Activated CD4-positive, alpha-beta memory T cell treated with anti-CD3 and anti-CD28 coated beads, Interleukin-2, amount 10 ng/mL, durations not matched to agents 7 days and 5 days (primary cell): ENCODE measurements at regions of chr22 and their contacts with region 1.

Region 1: GRCh38 chr22:40044102-40044869 is 49.5 kb downstream of the FAM83F start:
- DNase-seq: peak; percentile 99
- H3K4me3 Mint-ChIP-seq: peak overlapping the region; percentile 92
- H3K27ac Mint-ChIP-seq: peak overlapping the region; percentile 97
- H3K4me1 Mint-ChIP-seq: peaks cover 26% of the 10 kb centered on the region
- H3K27me3 Mint-ChIP-seq: peaks cover 7% of the 10 kb centered on the region

Region 2: DNA sequence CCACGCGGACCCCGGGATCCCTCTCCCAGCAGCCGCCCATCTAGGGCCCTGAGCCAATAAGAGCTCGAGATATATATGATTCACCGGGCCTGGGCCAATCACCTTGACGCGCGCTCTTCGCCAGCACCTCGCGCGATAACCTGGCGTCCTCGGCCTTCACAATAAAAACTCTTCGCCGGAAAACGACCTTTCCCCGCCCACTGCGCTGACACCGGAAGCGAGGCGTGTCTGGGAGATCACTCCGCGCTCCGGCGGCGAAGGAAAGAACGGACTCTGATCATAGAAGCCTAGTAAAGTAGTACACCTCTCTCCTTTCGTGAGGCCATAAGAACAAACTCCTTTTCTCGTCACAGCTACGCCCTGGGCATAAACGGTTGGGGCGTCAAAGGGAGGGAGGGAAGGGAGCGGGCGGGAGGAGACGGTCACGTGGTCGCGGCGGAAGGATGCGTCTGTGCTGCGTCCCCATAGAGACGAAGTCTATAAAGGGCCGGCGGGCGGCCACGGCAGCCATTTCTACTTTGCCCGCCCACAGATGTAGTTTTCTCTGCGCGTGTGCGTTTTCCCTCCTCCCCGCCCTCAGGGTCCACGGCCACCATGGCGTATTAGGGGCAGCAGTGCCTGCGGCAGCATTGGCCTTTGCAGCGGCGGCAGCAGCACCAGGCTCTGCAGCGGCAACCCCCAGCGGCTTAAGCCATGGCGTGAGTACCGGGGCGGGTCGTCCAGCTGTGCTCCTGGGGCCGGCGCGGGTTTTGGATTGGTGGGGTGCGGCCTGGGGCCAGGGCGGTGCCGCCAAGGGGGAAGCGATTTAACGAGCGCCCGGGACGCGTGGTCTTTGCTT is 524.0 kb before region 1 on chr22 and contains the start of gene ATF4:
- CTCF ChIA-PET with region 1: interaction called, 3 read pairs
- POLR2A ChIA-PET with region 1: interaction called, 27 read pairs
- DNase-seq: peak; percentile 97
- H3K4me3 Mint-ChIP-seq: peak within 1 kb of the TSS; percentile 94
- H3K27ac Mint-ChIP-seq: peak within 1 kb of the TSS; percentile 99
- H3K4me1 Mint-ChIP-seq: peaks cover 58% of the 10 kb centered on the region
- H3K27me3 Mint-ChIP-seq: peaks cover 2% of the 10 kb centered on the region
- total RNA-seq, gene ATF4: 456 to 460 TPM

Region 3: DNA sequence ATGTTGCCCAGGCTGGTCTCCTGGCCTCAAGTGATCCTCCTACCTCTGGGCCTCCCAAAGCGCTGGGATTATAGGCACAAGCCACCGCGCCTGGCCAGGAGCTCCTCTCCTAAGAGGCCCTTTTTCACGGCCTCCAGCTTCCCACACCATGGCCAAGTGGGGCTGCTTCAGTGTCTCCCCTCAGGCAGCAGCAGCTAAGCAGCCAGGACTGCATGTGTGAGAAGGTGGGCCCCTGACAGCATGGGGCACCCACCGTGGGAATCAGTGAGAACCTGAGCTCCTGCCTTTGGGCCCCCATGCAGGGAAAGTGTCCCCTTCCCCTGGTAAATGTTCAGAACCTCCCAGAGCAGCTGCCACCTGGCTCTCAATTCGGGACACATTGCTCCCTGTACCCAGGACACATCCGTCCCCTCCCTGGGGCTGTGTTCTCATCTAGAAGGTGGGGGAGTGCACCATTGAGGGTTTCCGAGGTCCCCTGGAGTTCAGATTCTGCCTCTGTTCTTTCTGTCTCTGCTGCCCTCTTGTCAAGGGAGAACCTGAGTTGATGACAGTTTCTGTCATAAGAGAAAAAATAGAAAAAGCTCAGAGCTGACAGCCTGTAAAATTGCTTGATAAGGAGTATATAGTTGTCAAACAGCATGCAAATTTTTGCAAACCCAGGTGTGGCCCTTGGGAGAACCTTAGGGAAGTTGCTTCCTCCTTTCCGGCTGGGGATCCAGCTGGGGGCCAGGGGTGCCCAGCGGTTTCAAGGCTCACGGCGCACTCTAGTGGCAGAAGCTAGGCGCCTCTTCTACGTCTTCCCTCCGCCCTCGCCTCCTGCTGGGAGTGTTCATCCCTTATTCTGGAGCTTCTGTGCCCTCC is 19.9 kb before region 1 on chr22:
- CTCF ChIA-PET with region 1: interaction called, 14 read pairs
- POLR2A ChIA-PET with region 1: interaction called, 7 read pairs
- DNase-seq: peak; percentile 69
- H3K4me3 Mint-ChIP-seq: no peak overlapping the region
- H3K27ac Mint-ChIP-seq: no peak overlapping the region
- H3K4me1 Mint-ChIP-seq: peaks cover 5% of the 10 kb centered on the region
- H3K27me3 Mint-ChIP-seq: no peaks in the 10 kb centered on the region

Region 4: DNA sequence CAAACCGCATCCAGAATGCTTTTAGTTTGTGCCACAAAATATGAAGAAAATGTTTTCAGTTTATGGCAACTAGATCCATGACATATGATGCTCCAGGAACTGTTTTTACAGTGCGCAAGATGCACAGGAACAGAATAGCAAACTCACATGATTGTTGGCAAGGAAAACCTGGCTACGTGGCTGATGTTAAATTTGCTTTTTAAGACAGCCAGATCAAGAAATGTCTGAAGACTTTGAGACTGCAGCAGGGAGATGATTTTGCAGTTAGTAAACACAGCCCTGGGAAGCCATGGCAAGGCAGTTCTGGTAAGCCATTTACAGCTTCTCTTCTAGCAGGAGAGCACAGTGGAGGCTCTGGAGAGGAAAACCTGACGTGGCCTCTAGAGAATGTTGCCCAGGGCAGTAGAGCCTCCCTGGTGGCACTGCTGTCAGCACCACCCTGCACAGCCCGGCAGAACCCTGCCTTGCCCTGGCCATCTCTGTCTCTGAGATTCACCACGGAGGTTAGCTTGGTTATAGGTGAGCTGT is 63.6 kb after region 1 on chr22:
- CTCF ChIA-PET with region 1: interaction called, 4 read pairs
- POLR2A ChIA-PET with region 1: interaction called, 30 read pairs
- DNase-seq: peak; percentile 41
- H3K4me3 Mint-ChIP-seq: peak overlapping the region; percentile 70
- H3K27ac Mint-ChIP-seq: peak overlapping the region; percentile 72
- H3K4me1 Mint-ChIP-seq: peaks cover 51% of the 10 kb centered on the region
- H3K27me3 Mint-ChIP-seq: no peaks in the 10 kb centered on the region

Region 5: GRCh38 chr22:40215266-40215665 is 171.0 kb after region 1 on chr22:
- CTCF ChIA-PET with region 1: no interaction called
- POLR2A ChIA-PET with region 1: interaction called, 12 read pairs
- DNase-seq: no peak
- H3K4me3 Mint-ChIP-seq: no peak overlapping the region
- H3K27ac Mint-ChIP-seq: peak overlapping the region; percentile 73
- H3K4me1 Mint-ChIP-seq: peaks cover 73% of the 10 kb centered on the region
- H3K27me3 Mint-ChIP-seq: no peaks in the 10 kb centered on the region

Region 6: DNA sequence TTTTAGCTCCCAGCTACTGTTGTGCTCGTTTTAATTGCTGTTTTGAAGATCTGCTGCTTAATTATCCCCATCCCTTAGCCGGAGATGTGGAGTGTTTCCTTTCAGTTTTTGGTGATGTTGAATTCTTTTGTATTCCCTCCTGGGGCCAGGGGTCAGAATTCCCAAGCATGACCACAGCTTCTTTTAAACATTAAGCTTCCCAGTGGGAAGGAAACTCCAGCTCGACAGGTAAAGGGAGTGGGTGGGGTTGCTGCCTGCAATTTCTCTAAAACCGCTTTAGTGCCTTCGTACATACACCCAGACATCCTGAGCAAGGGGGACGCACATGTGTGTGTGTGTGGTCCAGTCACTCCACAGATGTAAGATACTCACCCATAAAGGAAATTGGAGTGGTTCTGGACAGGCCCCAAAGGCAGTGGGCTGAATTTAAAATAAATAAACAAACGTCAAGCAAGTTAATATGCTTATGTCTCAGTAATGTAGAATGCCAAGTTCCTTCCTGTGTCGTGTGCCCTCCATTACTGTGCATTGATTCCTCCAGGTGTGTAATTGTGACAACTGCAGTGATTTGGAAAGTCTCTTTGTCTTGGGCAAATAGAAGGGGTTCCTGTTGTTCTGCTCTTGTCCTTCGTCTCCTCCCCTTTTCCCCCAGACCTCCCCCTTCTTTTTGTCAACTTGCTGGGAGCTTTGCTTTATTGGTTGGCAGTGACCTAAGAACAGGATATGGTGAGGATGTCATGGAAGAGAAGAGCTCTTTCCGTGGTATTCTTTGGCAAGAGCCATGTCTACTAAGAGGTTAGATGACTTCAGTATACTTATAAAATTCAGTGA is 282.8 kb after region 1 on chr22:
- CTCF ChIA-PET with region 1: interaction called, 5 read pairs
- POLR2A ChIA-PET with region 1: interaction called, 22 read pairs
- DNase-seq: no peak
- H3K4me3 Mint-ChIP-seq: no peak overlapping the region
- H3K27ac Mint-ChIP-seq: no peak overlapping the region
- H3K4me1 Mint-ChIP-seq: peaks cover 83% of the 10 kb centered on the region
- H3K27me3 Mint-ChIP-seq: no peaks in the 10 kb centered on the region